ENCODE measurements at regions of chr12 and their contacts with region 1.

Region 1: DNA sequence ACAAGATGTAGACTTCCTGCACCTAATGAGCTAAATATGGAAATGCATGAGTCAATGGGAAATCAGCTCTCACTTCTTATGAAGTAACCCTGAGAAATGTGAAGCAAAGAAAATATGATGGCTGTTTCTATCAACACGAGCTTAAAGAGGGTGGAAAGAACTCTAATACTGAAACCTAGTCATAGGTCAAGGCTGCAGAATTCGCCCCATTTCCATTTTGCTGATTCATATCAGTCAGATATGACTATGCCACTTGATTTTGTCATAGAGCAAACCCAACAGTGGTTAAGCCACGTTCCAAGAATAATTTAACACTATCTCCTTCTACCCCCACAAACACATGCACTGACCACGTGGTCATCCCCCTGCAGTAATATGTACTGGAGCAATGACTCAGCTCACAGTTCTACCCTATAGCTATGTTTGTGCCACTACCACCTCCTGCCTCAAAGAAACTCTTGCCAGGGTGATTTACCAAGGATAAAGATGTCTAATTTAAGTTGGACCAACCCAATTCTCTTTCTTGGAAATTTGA is 157.5 kb downstream of the TMTC3 start:
- DNase-seq: no peak
- H3K4me3 ChIP-seq: no peak overlapping the region
- H3K27ac ChIP-seq: no peak overlapping the region
- H3K4me1 ChIP-seq: no peaks in the 10 kb centered on the region
- H3K27me3 ChIP-seq: no peaks in the 10 kb centered on the region
- CTCF ChIP-seq: no peak
- EP300 ChIP-seq: no peak
- POLR2A ChIP-seq: no peak

Region 2: GRCh38 chr12:87813476-87814234 is 486.0 kb before region 1 on chr12:
- in situ Hi-C with region 1: no loop called
- intact Hi-C with region 1: no loop called
- DNase-seq: no peak
- H3K4me3 ChIP-seq: no peak overlapping the region
- H3K27ac ChIP-seq: no peak overlapping the region
- H3K4me1 ChIP-seq: no peaks in the 10 kb centered on the region
- H3K27me3 ChIP-seq: no peaks in the 10 kb centered on the region
- CTCF ChIP-seq: no peak
- EP300 ChIP-seq: no peak
- POLR2A ChIP-seq: no peak

Region 3: GRCh38 chr12:88202500-88202899 is 97.1 kb before region 1 on chr12:
- in situ Hi-C with region 1: no loop called
- intact Hi-C with region 1: no loop called
- DNase-seq: no peak
- H3K4me3 ChIP-seq: no peak overlapping the region
- H3K27ac ChIP-seq: no peak overlapping the region
- H3K4me1 ChIP-seq: no peaks in the 10 kb centered on the region
- H3K27me3 ChIP-seq: no peaks in the 10 kb centered on the region
- CTCF ChIP-seq: no peak
- EP300 ChIP-seq: no peak
- POLR2A ChIP-seq: no peak

Region 4: GRCh38 chr12:88334271-88334670 is 34.6 kb after region 1 on chr12:
- in situ Hi-C with region 1: no loop called
- intact Hi-C with region 1: loop called (anchors 2 kb)
- DNase-seq: no peak
- H3K4me3 ChIP-seq: no peak overlapping the region
- H3K27ac ChIP-seq: peak overlapping the region in 1 of 4 donors; percentile 39
- H3K4me1 ChIP-seq: peaks cover 0 to 5% (median 0%) of the 10 kb centered on the region in 4 donors
- H3K27me3 ChIP-seq: no peaks in the 10 kb centered on the region
- CTCF ChIP-seq: no peak
- EP300 ChIP-seq: no peak
- POLR2A ChIP-seq: no peak

Measured in transverse colon (tissue), 4 donors.